ENCODE measurements at regions of chr2 and their contacts with region 1.

Region 1: GRCh38 chr2:200483729-200484198 is 26.1 kb downstream of the KCTD18 start:
- DNase-seq: peak; percentile 49
- ATAC-seq: peak; percentile 41
- H3K4me3 Mint-ChIP-seq: no peak overlapping the region
- H3K27ac Mint-ChIP-seq: no peak overlapping the region
- H3K4me1 Mint-ChIP-seq: peaks cover 19% of the 10 kb centered on the region
- H3K27me3 Mint-ChIP-seq: no peaks in the 10 kb centered on the region

Region 2: DNA sequence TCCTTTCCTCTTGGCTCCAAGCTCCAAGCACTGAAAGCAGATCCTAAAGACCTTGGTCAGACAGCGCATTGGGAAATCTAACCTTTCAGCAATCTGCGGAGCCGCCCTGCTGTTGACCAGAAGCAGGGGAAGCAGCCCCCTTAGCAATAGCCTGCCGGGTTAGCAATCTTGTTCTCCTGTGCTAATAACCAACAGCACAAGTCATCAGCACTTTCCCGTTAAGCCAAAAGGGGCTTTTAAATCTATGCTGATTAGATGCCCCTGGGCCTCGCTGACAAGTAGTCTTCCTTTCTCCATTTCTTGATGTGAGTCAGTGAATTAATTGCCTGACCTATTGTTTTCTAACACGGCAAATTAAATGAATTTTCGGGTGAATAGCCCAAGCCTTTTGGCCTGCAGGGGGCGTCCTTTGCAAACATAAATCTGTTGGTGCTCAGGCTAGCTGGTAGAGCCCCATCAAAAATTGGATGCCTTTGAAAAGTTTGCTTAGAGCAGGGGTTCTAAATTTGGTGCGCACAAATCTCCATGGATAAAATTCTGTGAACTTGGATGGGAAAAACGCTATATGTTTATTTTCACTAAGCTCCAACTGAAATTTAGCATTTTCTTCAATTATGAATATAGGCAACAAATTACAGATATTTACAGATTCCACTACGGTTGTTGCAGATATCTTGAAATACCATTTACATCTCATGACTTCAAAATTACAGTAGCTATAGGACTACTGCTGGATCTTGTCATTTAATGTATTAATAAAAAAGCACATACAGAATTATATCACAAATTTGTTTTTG is 503.7 kb before region 1 on chr2:
- CTCF ChIA-PET with region 1: interaction called, 70 read pairs
- DNase-seq: peak; percentile 88
- ATAC-seq: peak; percentile 48
- H3K4me3 Mint-ChIP-seq: peak overlapping the region; percentile 31
- H3K27ac Mint-ChIP-seq: peak overlapping the region; percentile 36
- H3K4me1 Mint-ChIP-seq: peaks cover 29% of the 10 kb centered on the region
- H3K27me3 Mint-ChIP-seq: no peaks in the 10 kb centered on the region

Region 3: GRCh38 chr2:200279857-200280256 is 203.9 kb before region 1 on chr2:
- CTCF ChIA-PET with region 1: no interaction called
- DNase-seq: no peak
- ATAC-seq: no peak
- H3K4me3 Mint-ChIP-seq: no peak overlapping the region
- H3K27ac Mint-ChIP-seq: no peak overlapping the region
- H3K4me1 Mint-ChIP-seq: no peaks in the 10 kb centered on the region
- H3K27me3 Mint-ChIP-seq: peaks cover 36% of the 10 kb centered on the region

Region 4: GRCh38 chr2:200306196-200306930 is 177.4 kb before region 1 on chr2 and contains the start of gene SPATS2L:
- CTCF ChIA-PET with region 1: interaction called, 14 read pairs
- DNase-seq: peak; percentile 81
- ATAC-seq: peak; percentile 73
- H3K4me3 Mint-ChIP-seq: peak within 1 kb of the TSS; percentile 87
- H3K27ac Mint-ChIP-seq: peak within 1 kb of the TSS; percentile 86
- H3K4me1 Mint-ChIP-seq: peaks cover 38% of the 10 kb centered on the region
- H3K27me3 Mint-ChIP-seq: peaks cover 8% of the 10 kb centered on the region
- total RNA-seq, gene SPATS2L: 62.9 to 89.7 TPM

Region 5: DNA sequence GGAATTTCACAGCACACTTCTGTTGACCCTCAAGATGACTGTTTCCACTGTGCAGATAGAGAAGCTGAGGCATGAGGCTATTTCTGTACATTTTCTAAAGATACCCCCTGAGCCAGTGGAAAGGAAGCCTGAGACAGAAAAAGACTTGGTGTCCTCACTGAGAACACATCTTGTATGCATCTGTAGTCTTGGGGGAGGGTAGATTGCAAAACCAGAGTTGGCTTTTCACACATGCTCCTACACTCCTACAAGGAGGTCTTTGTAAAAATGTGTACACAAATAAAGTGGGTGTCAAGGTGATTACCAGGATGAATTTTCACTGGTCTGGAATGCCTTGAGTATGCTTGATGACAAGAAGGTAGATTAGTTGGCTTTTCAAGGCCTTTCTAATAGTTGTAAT is 71.9 kb before region 1 on chr2:
- CTCF ChIA-PET with region 1: no interaction called
- DNase-seq: no peak
- ATAC-seq: no peak
- H3K4me3 Mint-ChIP-seq: no peak overlapping the region
- H3K27ac Mint-ChIP-seq: no peak overlapping the region
- H3K4me1 Mint-ChIP-seq: peaks cover 31% of the 10 kb centered on the region
- H3K27me3 Mint-ChIP-seq: no peaks in the 10 kb centered on the region

Region 6: GRCh38 chr2:200498402-200499162 is 14.8 kb after region 1 on chr2:
- CTCF ChIA-PET with region 1: interaction called, 29 read pairs
- DNase-seq: no peak
- ATAC-seq: no peak
- H3K4me3 Mint-ChIP-seq: no peak overlapping the region
- H3K27ac Mint-ChIP-seq: no peak overlapping the region
- H3K4me1 Mint-ChIP-seq: no peaks in the 10 kb centered on the region
- H3K27me3 Mint-ChIP-seq: no peaks in the 10 kb centered on the region